Activated CD8-positive, alpha-beta T cell treated with anti-CD3 and anti-CD28 coated beads for 36 hours (primary cell): ENCODE measurements at regions of chr15 and their contacts with region 1.

Region 1: DNA sequence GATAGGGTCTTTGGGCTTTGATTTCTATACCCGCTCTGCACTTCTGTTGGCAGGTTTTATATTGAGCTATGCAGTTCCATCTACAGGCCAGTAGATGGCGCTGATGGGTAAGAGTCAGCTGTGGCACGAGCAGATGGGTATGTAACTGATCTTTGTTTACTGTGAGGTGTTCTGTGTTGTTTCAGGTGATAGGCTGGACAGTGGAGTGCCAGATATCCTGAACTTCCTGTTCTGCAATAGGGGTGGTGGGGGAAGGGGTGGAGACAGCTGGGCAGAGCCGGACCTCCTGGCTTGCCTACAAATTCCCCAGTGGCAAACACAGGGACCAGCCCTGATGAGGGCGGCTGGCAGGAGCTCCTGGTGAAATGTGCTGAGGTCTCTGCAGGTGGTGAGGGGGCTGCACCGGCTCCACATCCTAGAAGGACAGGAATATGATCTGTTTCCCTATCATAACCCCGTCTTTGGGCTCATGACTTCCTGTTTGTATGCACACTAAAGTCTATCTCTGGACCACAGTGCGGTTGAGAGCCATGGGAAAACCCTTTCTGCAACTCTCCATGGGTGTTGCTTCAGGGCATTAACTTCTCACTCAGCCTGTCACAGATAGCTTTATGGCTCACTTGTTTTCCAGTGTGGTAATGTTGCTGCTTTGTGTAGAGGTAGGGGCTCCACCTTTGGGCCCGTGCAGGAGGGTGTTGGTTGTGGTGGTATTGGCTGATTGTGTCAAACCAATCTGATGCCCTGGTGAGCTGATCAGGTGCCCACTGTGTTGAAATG is 13.4 kb upstream of the FAM98B start:
- DNase-seq: peak; percentile 70
- ATAC-seq: peak; percentile 95
- H3K4me3 Mint-ChIP-seq: no peak overlapping the region
- H3K27ac Mint-ChIP-seq: no peak overlapping the region
- H3K4me1 Mint-ChIP-seq: peaks cover 9% of the 10 kb centered on the region
- H3K27me3 Mint-ChIP-seq: peaks cover 8% of the 10 kb centered on the region
- CTCF ChIP-seq: peak; percentile 96

Region 2: DNA sequence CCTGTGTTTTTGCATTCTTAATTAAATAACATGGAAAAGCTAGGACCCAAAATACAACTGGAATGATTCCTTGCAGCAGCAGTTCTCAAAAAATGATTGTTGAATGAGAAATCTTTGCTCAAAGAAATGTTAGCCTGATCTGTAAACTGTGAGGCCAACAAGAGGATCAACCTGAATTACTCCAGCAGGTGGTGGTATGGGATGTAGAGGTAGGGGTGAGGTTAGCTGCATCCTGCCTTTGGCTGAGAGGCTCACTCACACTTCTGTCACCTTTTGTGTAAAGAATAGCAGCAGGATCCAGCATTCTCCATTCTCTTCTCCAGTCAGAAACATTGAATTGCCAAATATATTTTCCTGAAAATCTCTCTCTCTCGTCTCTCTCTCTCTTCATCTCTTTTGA is 13.2 kb before region 1 on chr15:
- CTCF ChIA-PET with region 1: interaction called, 21 read pairs
- POLR2A ChIA-PET with region 1: no interaction called
- intact Hi-C with region 1: no loop called
- DNase-seq: no peak
- ATAC-seq: peak; percentile 66
- H3K4me3 Mint-ChIP-seq: no peak overlapping the region
- H3K27ac Mint-ChIP-seq: no peak overlapping the region
- H3K4me1 Mint-ChIP-seq: no peaks in the 10 kb centered on the region
- H3K27me3 Mint-ChIP-seq: peaks cover 20% of the 10 kb centered on the region
- CTCF ChIP-seq: no peak

Region 3: GRCh38 chr15:38453971-38454695 is 13.6 kb after region 1 on chr15 and contains the start of gene FAM98B:
- CTCF ChIA-PET with region 1: interaction called, 54 read pairs
- POLR2A ChIA-PET with region 1: interaction called, 18 read pairs
- intact Hi-C with region 1: no loop called
- DNase-seq: peak; percentile 89
- ATAC-seq: peak; percentile 95
- H3K4me3 Mint-ChIP-seq: peak within 1 kb of the TSS; percentile 95
- H3K27ac Mint-ChIP-seq: peak within 1 kb of the TSS; percentile 93
- H3K4me1 Mint-ChIP-seq: peaks cover 30% of the 10 kb centered on the region
- H3K27me3 Mint-ChIP-seq: no peaks in the 10 kb centered on the region
- CTCF ChIP-seq: no peak
- total RNA-seq, gene FAM98B: 51.0 to 61.8 TPM

Region 4: GRCh38 chr15:38461066-38461833 is 20.7 kb after region 1 on chr15:
- CTCF ChIA-PET with region 1: interaction called, 37 read pairs
- POLR2A ChIA-PET with region 1: no interaction called
- intact Hi-C with region 1: no loop called
- DNase-seq: no peak
- ATAC-seq: peak; percentile 61
- H3K4me3 Mint-ChIP-seq: no peak overlapping the region
- H3K27ac Mint-ChIP-seq: no peak overlapping the region
- H3K4me1 Mint-ChIP-seq: peaks cover 48% of the 10 kb centered on the region
- H3K27me3 Mint-ChIP-seq: no peaks in the 10 kb centered on the region
- CTCF ChIP-seq: no peak

Region 5: DNA sequence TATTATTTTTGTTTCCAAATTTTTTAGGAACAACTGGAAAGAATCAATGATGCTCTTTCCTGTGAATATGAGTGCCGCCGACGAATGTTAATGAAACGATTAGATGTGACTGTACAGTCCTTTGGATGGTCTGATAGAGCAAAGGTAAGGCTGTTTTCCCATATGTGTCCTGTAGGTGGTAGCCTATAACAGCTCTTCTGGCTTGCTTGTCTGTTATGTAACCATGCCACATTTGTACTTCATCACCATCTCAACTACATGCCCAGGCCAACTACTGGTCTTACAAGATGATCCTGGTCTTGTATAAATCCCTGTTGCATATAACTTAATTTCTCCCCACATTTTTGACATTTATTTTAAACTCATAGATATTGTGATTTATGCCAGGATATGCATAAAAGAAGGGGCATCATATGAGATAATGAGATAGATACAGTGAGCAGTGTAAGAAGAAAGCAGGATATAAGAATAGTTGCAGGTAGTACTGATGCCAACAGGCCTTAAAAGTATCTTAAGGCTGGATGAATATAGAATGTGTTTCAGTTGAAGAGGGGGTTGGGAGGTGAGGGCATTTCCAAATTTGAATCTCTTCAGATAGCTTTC is 33.7 kb after region 1 on chr15:
- CTCF ChIA-PET with region 1: interaction called, 45 read pairs
- POLR2A ChIA-PET with region 1: no interaction called
- intact Hi-C with region 1: no loop called
- DNase-seq: peak; percentile 24
- ATAC-seq: peak; percentile 97
- H3K4me3 Mint-ChIP-seq: no peak overlapping the region
- H3K27ac Mint-ChIP-seq: no peak overlapping the region
- H3K4me1 Mint-ChIP-seq: peaks cover 2% of the 10 kb centered on the region
- H3K27me3 Mint-ChIP-seq: no peaks in the 10 kb centered on the region
- CTCF ChIP-seq: peak; percentile 79

Region 6: GRCh38 chr15:38479266-38479665 is 38.7 kb after region 1 on chr15:
- CTCF ChIA-PET with region 1: interaction called, 13 read pairs
- POLR2A ChIA-PET with region 1: no interaction called
- intact Hi-C with region 1: loop called (anchors 5 kb)
- DNase-seq: no peak
- ATAC-seq: no peak
- H3K4me3 Mint-ChIP-seq: no peak overlapping the region
- H3K27ac Mint-ChIP-seq: no peak overlapping the region
- H3K4me1 Mint-ChIP-seq: peaks cover 27% of the 10 kb centered on the region
- H3K27me3 Mint-ChIP-seq: no peaks in the 10 kb centered on the region
- CTCF ChIP-seq: no peak

Region 7: GRCh38 chr15:38724827-38725226 is 284.3 kb after region 1 on chr15:
- CTCF ChIA-PET with region 1: interaction called, 15 read pairs
- POLR2A ChIA-PET with region 1: no interaction called
- intact Hi-C with region 1: no loop called
- DNase-seq: no peak
- ATAC-seq: no peak
- H3K4me3 Mint-ChIP-seq: no peak overlapping the region
- H3K27ac Mint-ChIP-seq: no peak overlapping the region
- H3K4me1 Mint-ChIP-seq: no peaks in the 10 kb centered on the region
- H3K27me3 Mint-ChIP-seq: no peaks in the 10 kb centered on the region
- CTCF ChIP-seq: no peak